ENCODE measurements at regions of chr17 and their contacts with region 1.

Region 1: GRCh38 chr17:53924530-53925455 is 102.1 kb downstream of the KIF2B start:
- DNase-seq: no peak
- H3K4me3 ChIP-seq: no peak overlapping the region
- H3K27ac ChIP-seq: no peak overlapping the region
- H3K27me3 ChIP-seq: no peaks in the 10 kb centered on the region
- CTCF ChIP-seq: no peak

Region 2: DNA sequence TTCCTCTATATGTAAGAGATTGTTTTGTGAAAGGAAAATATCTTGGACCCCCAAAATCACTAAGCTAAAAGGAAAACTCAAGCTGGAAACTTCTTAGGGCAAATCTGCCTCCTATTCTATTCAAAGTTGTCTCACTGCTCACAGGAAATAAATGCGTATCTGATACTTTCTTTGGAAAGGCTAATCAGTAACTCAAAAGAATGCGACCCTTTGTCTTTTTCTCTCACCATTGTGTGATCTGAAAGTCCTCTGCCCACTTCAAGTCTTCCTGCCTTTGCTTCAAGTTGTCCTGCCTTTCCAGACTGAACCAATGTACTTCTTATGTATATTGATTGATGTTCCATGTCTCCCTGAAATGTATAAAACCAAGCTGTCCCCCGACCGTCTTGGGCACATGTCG is 55.2 kb after region 1 on chr17:
- intact Hi-C with region 1: loop called in 1 of 2 experiments (anchors 10 kb)
- DNase-seq: no peak
- H3K4me3 ChIP-seq: no peak overlapping the region
- H3K27ac ChIP-seq: no peak overlapping the region
- H3K27me3 ChIP-seq: no peaks in the 10 kb centered on the region
- CTCF ChIP-seq: no peak